MCF 10A (cell line): ENCODE measurements at regions of chr17 and their contacts with region 1.

Region 1: GRCh38 chr17:76384222-76384986 is at the start of gene SPHK1:
- DNase-seq: peak; percentile 80
- H3K4me3 Mint-ChIP-seq: peak within 1 kb of the TSS; percentile 79
- H3K27ac Mint-ChIP-seq: no peak within 1 kb of the TSS
- H3K4me1 Mint-ChIP-seq: no peaks in the 10 kb centered on the region
- H3K27me3 Mint-ChIP-seq: no peaks in the 10 kb centered on the region
- CTCF ChIP-seq: no peak
- total RNA-seq, gene SPHK1: 7.1 and 12.6 TPM in 2 replicates

Region 2: DNA sequence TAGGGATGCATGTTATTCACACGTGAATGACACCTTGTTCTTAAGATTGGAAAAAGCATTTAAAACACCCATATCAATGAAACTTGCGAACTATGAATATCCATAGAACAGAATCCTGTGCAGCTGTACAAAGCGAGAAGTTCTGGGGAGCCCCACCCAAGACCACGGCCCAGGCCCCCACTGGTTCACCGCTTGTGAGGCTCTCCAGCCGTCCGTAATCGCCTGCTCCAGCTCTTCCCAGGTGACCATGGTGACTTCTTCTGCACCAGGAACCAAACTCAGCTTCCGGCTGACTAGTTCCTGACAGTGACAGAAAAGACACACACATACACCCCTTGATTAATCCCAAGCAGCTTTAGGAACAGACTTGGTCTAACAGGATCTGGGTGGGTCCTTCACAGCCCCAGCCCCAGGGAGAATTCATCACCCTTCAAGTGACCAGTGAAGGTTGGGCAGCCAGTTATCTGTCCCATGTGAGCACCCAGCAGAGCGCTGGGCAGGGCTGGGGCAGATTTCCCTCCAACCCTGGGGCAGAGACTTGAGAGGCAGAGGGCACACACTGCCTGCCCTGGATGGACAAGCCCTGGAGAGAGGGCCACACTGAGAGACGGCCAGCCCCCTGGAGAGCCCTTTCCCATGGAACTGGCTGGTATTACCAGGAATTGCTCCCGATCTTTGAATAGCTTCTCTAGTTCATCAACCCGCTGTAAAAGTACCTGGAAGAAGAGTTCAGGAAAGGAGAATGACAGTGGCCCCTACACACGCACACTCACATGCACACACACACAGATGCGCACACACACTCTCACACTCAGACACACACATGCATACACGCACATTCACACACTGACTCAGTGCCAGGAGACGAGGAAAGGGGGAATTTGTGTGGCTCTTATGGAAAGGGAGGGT is 79.9 kb before region 1 on chr17:
- CTCF ChIA-PET with region 1: interaction called, 32 read pairs
- POLR2A ChIA-PET with region 1: interaction called, 5 read pairs
- intact Hi-C with region 1: no loop called
- DNase-seq: no peak
- H3K4me3 Mint-ChIP-seq: no peak overlapping the region
- H3K27ac Mint-ChIP-seq: no peak overlapping the region
- H3K4me1 Mint-ChIP-seq: no peaks in the 10 kb centered on the region
- H3K27me3 Mint-ChIP-seq: no peaks in the 10 kb centered on the region
- CTCF ChIP-seq: no peak

Region 3: GRCh38 chr17:76370261-76370993 is 14.0 kb before region 1 on chr17:
- CTCF ChIA-PET with region 1: interaction called, 15 read pairs
- POLR2A ChIA-PET with region 1: interaction called, 4 read pairs
- intact Hi-C with region 1: loop called (anchors 1 kb)
- DNase-seq: peak; percentile 84
- H3K4me3 Mint-ChIP-seq: no peak overlapping the region
- H3K27ac Mint-ChIP-seq: no peak overlapping the region
- H3K4me1 Mint-ChIP-seq: peaks cover 15% of the 10 kb centered on the region
- H3K27me3 Mint-ChIP-seq: no peaks in the 10 kb centered on the region
- CTCF ChIP-seq: peak; percentile 79